Activated naive CD8-positive, alpha-beta T cell treated with anti-CD3 and anti-CD28 coated beads, Interleukin-2, amount 10 ng/mL, durations not matched to agents 7 days and 5 days (primary cell): ENCODE measurements at regions of chr1 and their contacts with region 1.

Region 1: DNA sequence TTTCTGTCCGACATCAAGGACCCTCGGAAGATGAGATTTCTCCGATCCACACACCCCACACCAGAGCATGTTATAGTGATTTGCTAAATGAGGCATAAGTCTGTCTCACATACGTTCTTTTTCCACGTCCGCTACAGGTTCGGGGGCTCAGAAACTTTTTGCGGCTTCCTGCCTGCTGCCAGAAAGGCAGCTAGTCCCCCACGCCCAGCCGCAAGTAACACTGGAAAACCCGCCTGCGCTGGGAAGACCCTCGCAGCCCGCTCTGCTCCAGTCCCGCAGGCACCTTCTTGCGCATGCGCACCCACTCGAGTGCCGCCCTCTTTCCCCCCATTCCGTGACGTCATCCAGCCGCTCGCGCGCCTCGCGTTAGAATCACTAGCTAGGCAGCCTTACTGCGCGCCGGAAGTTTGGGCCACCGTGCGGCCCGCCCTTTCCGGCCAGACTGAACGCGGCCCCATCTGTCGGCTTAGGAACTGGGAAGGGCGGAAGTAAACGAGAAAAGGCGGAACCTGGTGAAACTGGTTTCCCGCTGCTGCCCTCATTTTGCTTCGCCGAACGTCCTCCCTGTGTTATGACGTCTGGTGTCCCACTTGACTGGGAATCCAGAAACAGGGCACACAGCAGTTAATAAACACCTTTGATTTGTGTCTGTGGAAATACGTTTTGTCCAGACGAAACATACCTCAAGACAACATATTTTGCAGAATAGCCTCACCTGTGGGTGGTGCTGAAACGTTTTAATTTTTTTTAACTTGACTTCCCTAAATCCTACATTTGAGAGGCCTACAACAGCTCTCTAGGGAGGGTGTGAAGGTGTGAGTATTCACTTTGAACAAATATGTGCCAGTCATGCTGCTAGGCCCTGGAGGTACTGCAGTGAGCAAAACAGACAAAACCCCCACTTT is at the start of gene C1orf74:
- DNase-seq: peak; percentile 99
- ATAC-seq: peak; percentile 99
- H3K4me3 Mint-ChIP-seq: peak within 1 kb of the TSS; percentile 90
- H3K27ac Mint-ChIP-seq: peak within 1 kb of the TSS; percentile 94
- H3K4me1 Mint-ChIP-seq: peaks cover 35% of the 10 kb centered on the region
- H3K27me3 Mint-ChIP-seq: no peaks in the 10 kb centered on the region
- total RNA-seq, gene C1orf74: 2.2 to 2.8 TPM

Region 2: DNA sequence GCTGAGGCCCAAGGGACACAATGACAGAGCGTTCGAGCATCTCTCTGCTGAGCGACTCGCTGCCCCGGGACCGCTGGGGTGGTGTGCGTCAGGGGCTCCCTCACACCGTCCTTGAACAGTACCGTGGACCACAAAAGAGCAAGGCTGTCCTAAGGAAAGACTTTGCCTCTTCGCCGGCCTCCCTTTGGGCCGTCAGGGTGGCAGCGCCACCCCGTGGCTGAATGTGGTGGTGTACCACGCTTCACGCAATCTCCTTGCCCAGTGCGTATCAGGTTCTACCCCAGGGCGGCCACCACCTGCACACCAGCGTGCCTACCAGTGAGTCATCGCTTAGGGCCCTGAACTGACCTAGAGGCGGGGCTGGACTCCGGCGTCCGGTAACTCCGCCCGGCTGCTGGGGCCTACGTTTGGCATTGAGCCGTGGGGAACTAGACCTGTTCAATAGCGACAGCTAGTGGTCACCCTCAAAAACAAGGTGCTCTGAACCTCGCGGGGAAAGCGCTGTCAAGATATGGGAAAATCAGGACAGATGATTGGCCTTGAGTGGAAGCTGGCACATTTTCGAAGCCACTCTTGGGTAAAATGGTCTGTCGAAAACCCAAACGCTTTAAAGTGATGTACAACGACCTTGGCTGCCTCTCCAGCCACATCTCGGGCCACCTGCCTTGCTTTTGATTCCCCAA is 36.8 kb before region 1 on chr1:
- POLR2A ChIA-PET with region 1: interaction called, 10 read pairs
- DNase-seq: peak; percentile 91
- ATAC-seq: peak; percentile 82
- H3K4me3 Mint-ChIP-seq: peak overlapping the region; percentile 78
- H3K27ac Mint-ChIP-seq: peak overlapping the region; percentile 92
- H3K4me1 Mint-ChIP-seq: peaks cover 46% of the 10 kb centered on the region
- H3K27me3 Mint-ChIP-seq: no peaks in the 10 kb centered on the region

Region 3: DNA sequence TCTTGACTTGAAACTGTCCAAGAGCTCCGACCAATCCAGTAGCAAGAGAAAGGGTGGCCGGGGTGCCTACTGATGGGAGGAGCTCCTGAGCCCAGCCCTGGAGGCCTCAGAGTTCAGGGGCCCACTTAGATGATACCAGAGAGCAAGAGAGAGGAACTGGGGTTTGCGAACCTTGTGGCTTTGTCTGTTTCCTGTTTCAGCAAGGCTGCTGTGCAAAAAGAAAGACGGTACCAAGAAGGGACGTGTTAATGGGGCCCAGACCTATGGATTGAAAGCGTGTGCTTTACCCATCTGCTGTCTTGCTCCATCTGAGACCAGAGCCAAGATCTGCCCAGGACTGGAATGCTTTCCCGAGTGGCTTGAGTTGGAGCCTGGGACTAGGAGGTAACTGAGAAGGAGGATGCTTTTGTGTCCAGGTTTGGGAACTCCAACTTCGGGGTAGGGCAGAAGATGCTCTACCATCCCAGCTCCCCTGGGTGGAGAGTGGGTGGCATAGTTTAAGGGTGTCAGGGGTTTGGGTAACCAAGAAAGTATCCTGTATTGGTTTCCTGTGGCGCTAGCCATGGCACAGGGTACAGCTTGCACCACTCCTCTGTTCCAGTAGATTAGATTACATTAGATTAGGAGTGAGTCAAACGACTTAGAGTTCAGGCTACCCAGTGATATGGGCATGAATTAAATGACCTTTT is 28.4 kb before region 1 on chr1 and contains the start of gene TRAF3IP3:
- POLR2A ChIA-PET with region 1: interaction called, 29 read pairs
- DNase-seq: peak; percentile 65
- ATAC-seq: peak; percentile 85
- H3K4me3 Mint-ChIP-seq: peak within 1 kb of the TSS; percentile 92
- H3K27ac Mint-ChIP-seq: peak within 1 kb of the TSS; percentile 94
- H3K4me1 Mint-ChIP-seq: peaks cover 64% of the 10 kb centered on the region
- H3K27me3 Mint-ChIP-seq: no peaks in the 10 kb centered on the region
- total RNA-seq, gene TRAF3IP3: 392 to 403 TPM

Region 4: GRCh38 chr1:209895709-209896108 is 111.2 kb after region 1 on chr1:
- POLR2A ChIA-PET with region 1: no interaction called
- DNase-seq: no peak
- ATAC-seq: no peak
- H3K4me3 Mint-ChIP-seq: no peak overlapping the region
- H3K27ac Mint-ChIP-seq: no peak overlapping the region
- H3K4me1 Mint-ChIP-seq: no peaks in the 10 kb centered on the region
- H3K27me3 Mint-ChIP-seq: no peaks in the 10 kb centered on the region

Region 5: DNA sequence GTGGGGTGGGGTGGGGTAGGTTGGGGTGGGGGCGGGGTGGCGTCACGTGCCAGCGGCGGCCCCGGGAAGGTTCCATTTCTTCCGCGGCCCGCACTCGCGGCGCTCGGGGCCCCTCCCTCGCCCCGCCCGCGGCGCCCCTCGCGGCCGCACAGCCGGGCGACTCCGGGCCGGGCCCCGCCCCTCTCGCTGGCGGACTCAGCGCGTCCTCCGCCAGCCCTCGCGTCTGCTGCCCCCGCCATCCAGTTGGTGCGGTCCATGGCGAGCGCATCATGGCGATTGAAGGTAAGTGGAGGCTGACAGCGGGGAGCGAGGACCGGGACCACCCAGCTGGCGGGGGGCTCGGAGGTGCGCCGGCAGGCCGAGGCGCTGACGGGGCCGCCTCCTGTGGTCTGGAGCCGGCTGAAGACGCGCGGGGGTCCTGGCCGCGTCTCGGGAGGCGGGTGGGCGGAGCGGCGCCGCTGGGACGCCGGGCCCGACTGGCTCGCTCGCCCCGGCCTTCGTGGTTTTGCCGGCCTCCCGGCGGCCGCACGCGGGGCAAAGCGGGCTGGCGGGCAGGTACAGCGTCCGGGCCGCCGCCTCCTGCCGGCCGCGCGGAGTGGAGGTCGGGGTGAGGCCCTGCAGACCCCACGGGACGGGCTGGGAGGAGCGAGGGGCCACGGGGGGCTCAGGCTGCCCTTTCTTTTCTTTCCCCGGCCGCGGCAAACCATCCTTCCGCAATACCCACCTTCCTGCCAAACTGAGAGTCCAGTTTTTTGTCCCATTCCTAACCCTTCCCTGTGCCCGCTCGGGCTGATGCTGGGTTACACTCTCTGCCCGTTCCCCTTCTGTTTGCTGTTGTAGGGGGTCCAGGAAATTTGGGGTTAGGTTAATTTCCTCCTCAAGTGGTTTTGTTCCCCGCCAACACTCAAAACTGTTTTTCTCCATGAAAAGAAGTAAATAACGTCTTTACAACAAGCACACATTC is 153.8 kb after region 1 on chr1 and contains the start of gene SYT14:
- POLR2A ChIA-PET with region 1: no interaction called
- DNase-seq: no peak
- ATAC-seq: peak; percentile 22
- H3K4me3 Mint-ChIP-seq: peak within 1 kb of the TSS; percentile 70
- H3K27ac Mint-ChIP-seq: no peak within 1 kb of the TSS
- H3K4me1 Mint-ChIP-seq: peaks cover 4% of the 10 kb centered on the region
- H3K27me3 Mint-ChIP-seq: peaks cover 33% of the 10 kb centered on the region
- total RNA-seq, gene SYT14: not detected

Region 6: DNA sequence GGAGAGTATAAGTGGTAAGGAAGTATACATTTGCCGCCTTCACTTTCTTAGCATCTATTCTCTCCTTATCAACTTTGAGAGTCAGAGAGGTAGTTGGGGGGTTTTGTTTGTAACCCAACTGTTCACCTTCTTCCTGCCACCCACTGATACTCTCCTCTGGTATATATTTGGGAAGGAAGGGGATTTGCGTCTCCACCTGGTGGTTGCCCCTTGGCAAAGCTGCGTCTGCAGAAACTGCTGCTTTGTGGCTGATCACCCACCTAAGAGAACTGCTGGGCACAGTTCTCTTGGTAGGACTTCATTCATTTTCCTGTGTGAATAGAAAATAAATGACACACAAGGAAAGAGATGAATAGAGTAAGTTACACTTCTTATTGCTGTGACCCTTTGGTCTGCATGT is 240.5 kb after region 1 on chr1:
- POLR2A ChIA-PET with region 1: no interaction called
- DNase-seq: no peak
- ATAC-seq: no peak
- H3K4me3 Mint-ChIP-seq: no peak overlapping the region
- H3K27ac Mint-ChIP-seq: no peak overlapping the region
- H3K4me1 Mint-ChIP-seq: no peaks in the 10 kb centered on the region
- H3K27me3 Mint-ChIP-seq: no peaks in the 10 kb centered on the region

Region 7: DNA sequence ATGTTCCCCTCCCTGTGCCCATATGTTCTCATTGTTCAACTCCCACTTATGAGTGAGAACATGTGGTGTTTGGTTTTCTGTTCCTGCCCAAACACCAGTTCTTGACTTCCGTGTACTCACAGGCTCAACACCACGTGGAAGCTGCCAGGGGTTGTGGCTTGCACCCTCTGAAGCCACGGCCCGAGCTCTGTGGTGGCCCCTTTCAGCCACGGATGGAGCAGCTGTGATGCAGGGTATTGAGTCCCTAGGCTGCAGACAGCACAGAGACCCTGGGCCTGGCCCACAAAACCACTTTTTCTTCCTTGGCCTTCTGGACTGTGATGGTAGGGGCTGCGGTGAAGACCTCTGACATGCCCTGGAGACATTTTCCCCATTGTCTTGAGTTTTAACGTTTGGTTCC is 265.1 kb after region 1 on chr1:
- POLR2A ChIA-PET with region 1: no interaction called
- DNase-seq: no peak
- ATAC-seq: no peak
- H3K4me3 Mint-ChIP-seq: no peak overlapping the region
- H3K27ac Mint-ChIP-seq: no peak overlapping the region
- H3K4me1 Mint-ChIP-seq: no peaks in the 10 kb centered on the region
- H3K27me3 Mint-ChIP-seq: peaks cover 3% of the 10 kb centered on the region